ENCODE measurements at regions of chr1 and their contacts with region 1.

Region 1: GRCh38 chr1:235105051-235106043 is 23.3 kb downstream of the TOMM20 start:
- DNase-seq: peak in 4 of 5 donors; percentile 26 to 38 (median 34)
- H3K4me3 ChIP-seq: peak overlapping the region in 1 of 2 donors; percentile 39
- H3K4me3 Mint-ChIP-seq: peak overlapping the region; percentile 72 to 98 (median 86)
- H3K27ac ChIP-seq: peak overlapping the region; percentile 5
- H3K27ac Mint-ChIP-seq: peak overlapping the region; percentile 81 to 96 (median 88)
- H3K4me1 ChIP-seq: peaks cover 42% of the 10 kb centered on the region
- H3K4me1 Mint-ChIP-seq: peaks cover 28 to 52% (median 38%) of the 10 kb centered on the region in 4 donors
- H3K27me3 ChIP-seq: no peaks in the 10 kb centered on the region
- H3K27me3 Mint-ChIP-seq: peaks cover 0 to 1% of the 10 kb centered on the region in 2 donors

Region 2: DNA sequence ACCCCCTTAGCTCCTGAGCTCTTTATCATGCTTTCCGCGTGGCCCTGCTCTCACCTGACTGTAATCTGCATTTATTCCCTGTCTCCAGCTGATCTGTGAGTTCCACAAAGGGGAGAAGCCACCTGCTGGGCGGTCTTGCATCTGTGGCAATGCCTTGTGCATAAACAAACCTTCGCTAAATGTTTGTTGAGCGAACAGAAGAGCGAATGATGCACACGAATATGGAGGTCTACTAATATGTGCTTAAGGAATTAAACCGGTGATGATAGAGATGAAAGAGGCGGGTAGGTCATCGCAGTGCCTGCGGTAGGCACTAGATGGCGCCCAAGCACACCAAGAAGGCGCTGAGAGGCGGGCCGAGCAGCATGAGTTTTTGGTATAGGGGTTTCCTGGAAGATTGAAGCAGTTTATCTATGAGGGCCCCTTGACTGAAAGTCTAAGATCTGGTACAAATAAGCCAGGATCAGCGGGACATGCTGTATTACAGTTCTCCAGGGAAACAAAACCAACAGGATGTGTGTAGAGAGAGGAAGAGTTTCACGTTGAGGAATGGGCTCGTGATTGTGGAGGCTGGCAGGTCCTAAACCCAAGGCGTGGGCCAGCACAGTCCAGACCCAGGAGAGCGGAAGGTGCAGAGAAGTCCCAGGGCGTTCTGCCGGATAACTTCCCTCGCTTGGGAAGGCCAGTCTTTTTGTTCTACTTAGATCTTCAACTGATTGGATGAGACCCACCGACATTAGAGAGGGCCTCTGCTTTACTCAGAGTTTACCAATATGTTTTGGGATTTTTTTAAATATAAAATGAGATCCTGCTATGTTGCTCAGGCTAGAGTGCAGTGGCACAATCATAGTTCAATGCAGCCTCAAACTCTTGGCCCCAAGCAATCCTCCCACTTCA is 11.4 kb before region 1 on chr1:
- CTCF ChIA-PET with region 1: interaction called, 75 read pairs
- POLR2A ChIA-PET with region 1: no interaction called
- intact Hi-C with region 1: no loop called
- DNase-seq: peak; percentile 77 to 80 (median 79)
- H3K4me3 ChIP-seq: no peak overlapping the region
- H3K4me3 Mint-ChIP-seq: peak overlapping the region in 1 of 8 donors; percentile 39
- H3K27ac ChIP-seq: no peak overlapping the region
- H3K27ac Mint-ChIP-seq: peak overlapping the region in 3 of 7 donors; percentile 14 to 71 (median 29)
- H3K4me1 ChIP-seq: peaks cover 9% of the 10 kb centered on the region
- H3K4me1 Mint-ChIP-seq: peaks cover 6 to 10% (median 7%) of the 10 kb centered on the region in 4 donors
- H3K27me3 ChIP-seq: no peaks in the 10 kb centered on the region
- H3K27me3 Mint-ChIP-seq: peaks cover 0 to 5% of the 10 kb centered on the region in 2 donors

Region 3: DNA sequence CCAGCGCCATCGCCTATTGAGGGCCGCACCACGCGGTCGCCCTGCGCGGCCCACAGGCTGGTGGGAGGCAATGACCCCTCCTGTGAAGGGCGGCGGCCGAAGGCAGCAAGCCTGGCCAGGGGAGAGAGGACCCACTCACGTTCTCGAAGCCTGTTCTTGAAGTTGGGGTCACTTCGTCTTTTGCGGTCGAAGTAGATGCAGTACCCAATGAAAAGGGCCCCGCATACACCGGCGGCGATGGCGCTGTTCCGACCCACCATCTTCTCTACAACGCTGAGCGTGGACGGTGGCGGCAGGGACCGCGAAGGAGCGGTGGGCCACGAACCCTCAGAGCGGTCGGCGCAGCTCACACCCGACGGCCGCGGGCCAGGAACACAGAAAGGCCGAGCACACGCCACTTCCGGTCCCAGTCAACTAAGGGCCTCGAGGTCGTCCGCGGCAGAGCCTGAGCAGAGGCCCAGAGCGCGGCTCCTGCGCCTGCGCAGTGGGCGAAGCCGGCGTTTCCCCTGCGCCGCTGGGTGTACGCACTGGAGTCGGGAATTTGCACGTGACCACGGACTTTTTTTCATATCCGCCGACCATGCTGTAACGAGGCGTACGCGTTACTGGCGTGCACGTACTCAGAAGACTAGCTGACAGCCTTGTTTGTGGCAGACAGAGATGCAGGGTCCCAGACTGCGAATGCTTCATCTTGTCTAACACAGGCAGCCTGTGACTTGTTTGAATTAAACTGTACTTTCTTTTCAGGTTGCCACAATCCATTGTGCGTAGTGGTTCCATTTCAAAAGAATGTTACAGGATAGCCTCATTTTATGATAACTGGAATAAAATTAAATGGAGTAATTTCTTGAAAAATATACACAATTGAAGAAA is 23.3 kb after region 1 on chr1 and contains the start of gene TOMM20:
- CTCF ChIA-PET with region 1: interaction called, 5 read pairs
- POLR2A ChIA-PET with region 1: interaction called, 4 read pairs
- intact Hi-C with region 1: loop called (anchors 1 kb)
- DNase-seq: peak; percentile 95 to 97 (median 96)
- H3K4me3 ChIP-seq: peak within 1 kb of the TSS; percentile 64 to 83
- H3K4me3 Mint-ChIP-seq: peak within 1 kb of the TSS; percentile 89 to 98 (median 97)
- H3K27ac ChIP-seq: peak within 1 kb of the TSS; percentile 94
- H3K27ac Mint-ChIP-seq: peak within 1 kb of the TSS; percentile 95 to 99 (median 97)
- H3K4me1 ChIP-seq: peaks cover 41% of the 10 kb centered on the region
- H3K4me1 Mint-ChIP-seq: peaks cover 19 to 51% (median 32%) of the 10 kb centered on the region in 4 donors
- H3K27me3 ChIP-seq: no peaks in the 10 kb centered on the region
- H3K27me3 Mint-ChIP-seq: no peaks in the 10 kb centered on the region
- total RNA-seq, gene TOMM20: 102 to 108 TPM

Region 4: DNA sequence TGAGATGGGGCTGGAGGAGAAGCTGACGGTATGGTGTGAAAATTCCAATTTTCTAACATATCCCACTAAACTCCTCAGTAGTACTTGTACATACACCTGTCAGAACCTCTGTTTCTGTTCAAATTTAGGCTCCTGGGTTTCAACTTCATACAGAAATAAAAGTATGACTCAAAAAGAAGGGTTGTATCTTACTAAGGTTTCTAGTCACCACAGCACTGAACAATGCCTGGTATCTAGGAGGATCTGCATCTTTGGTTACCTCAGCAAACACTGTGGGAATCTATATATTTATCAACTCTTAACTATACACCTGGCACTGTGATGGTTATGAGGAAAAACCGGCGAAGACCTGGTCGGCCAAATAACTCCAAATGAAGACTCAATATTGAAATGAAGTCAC is 41.9 kb after region 1 on chr1:
- CTCF ChIA-PET with region 1: no interaction called
- POLR2A ChIA-PET with region 1: no interaction called
- intact Hi-C with region 1: no loop called
- DNase-seq: no peak
- H3K4me3 ChIP-seq: no peak overlapping the region
- H3K4me3 Mint-ChIP-seq: no peak overlapping the region
- H3K27ac ChIP-seq: no peak overlapping the region
- H3K27ac Mint-ChIP-seq: peak overlapping the region in 1 of 7 donors; percentile 68
- H3K4me1 ChIP-seq: peaks cover 11% of the 10 kb centered on the region
- H3K4me1 Mint-ChIP-seq: peaks cover 17 to 24% (median 21%) of the 10 kb centered on the region in 4 donors
- H3K27me3 ChIP-seq: no peaks in the 10 kb centered on the region
- H3K27me3 Mint-ChIP-seq: no peaks in the 10 kb centered on the region

Region 5: GRCh38 chr1:235160957-235161684 is 55.8 kb after region 1 on chr1 and contains the start of gene RBM34:
- CTCF ChIA-PET with region 1: interaction called, 6 read pairs
- POLR2A ChIA-PET with region 1: interaction called, 11 read pairs
- intact Hi-C with region 1: loop called (anchors 2 kb)
- DNase-seq: peak; percentile 90 to 93 (median 91)
- H3K4me3 ChIP-seq: peak within 1 kb of the TSS; percentile 79 to 80
- H3K4me3 Mint-ChIP-seq: peak within 1 kb of the TSS; percentile 94 to 99 (median 98)
- H3K27ac ChIP-seq: peak within 1 kb of the TSS; percentile 92
- H3K27ac Mint-ChIP-seq: peak within 1 kb of the TSS; percentile 95 to 99 (median 98)
- H3K4me1 ChIP-seq: peaks cover 50% of the 10 kb centered on the region
- H3K4me1 Mint-ChIP-seq: peaks cover 15 to 30% (median 22%) of the 10 kb centered on the region in 4 donors
- H3K27me3 ChIP-seq: no peaks in the 10 kb centered on the region
- H3K27me3 Mint-ChIP-seq: no peaks in the 10 kb centered on the region
- total RNA-seq, gene RBM34: 120 TPM

Region 6: GRCh38 chr1:235253219-235253962 is 148.0 kb after region 1 on chr1:
- CTCF ChIA-PET with region 1: interaction called, 5 read pairs
- POLR2A ChIA-PET with region 1: no interaction called
- intact Hi-C with region 1: loop called (anchors 2 kb)
- DNase-seq: peak; percentile 58 to 71 (median 66)
- H3K4me3 ChIP-seq: no peak overlapping the region
- H3K4me3 Mint-ChIP-seq: no peak overlapping the region
- H3K27ac ChIP-seq: no peak overlapping the region
- H3K27ac Mint-ChIP-seq: peak overlapping the region; percentile 35 to 86 (median 70)
- H3K4me1 ChIP-seq: peaks cover 36% of the 10 kb centered on the region
- H3K4me1 Mint-ChIP-seq: peaks cover 24 to 46% (median 30%) of the 10 kb centered on the region in 4 donors
- H3K27me3 ChIP-seq: no peaks in the 10 kb centered on the region
- H3K27me3 Mint-ChIP-seq: no peaks in the 10 kb centered on the region

Region 7: GRCh38 chr1:235783148-235783776 is 677.9 kb after region 1 on chr1:
- CTCF ChIA-PET with region 1: interaction called, 5 read pairs
- POLR2A ChIA-PET with region 1: no interaction called
- intact Hi-C with region 1: loop called (anchors 2 kb)
- DNase-seq: peak in 4 of 5 donors; percentile 8 to 30 (median 9)
- H3K4me3 ChIP-seq: no peak overlapping the region
- H3K4me3 Mint-ChIP-seq: no peak overlapping the region
- H3K27ac ChIP-seq: no peak overlapping the region
- H3K27ac Mint-ChIP-seq: no peak overlapping the region
- H3K4me1 ChIP-seq: no peaks in the 10 kb centered on the region
- H3K4me1 Mint-ChIP-seq: no peaks in the 10 kb centered on the region
- H3K27me3 ChIP-seq: no peaks in the 10 kb centered on the region
- H3K27me3 Mint-ChIP-seq: no peaks in the 10 kb centered on the region

Measured in CD4-positive, alpha-beta memory T cell (primary cell).